ENCODE measurements at regions of chr12 and their contacts with region 1.

Region 1: GRCh38 chr12:104720339-104721038 is 237.6 kb downstream of the SLC41A2 start:
- DNase-seq: peak; percentile 32 to 92 (median 88)
- ATAC-seq: peak; percentile 87
- H3K4me3 ChIP-seq: peak overlapping the region; percentile 72
- H3K4me3 Mint-ChIP-seq: peak overlapping the region; percentile 73 to 95 (median 81)
- H3K27ac ChIP-seq: peak overlapping the region; percentile 77
- H3K27ac Mint-ChIP-seq: peak overlapping the region; percentile 86 to 96 (median 92)
- H3K4me1 ChIP-seq: peaks cover 30 to 39% of the 10 kb centered on the region in 2 donors
- H3K4me1 Mint-ChIP-seq: peaks cover 41 to 82% (median 65%) of the 10 kb centered on the region in 7 donors
- H3K27me3 ChIP-seq: no peaks in the 10 kb centered on the region
- H3K27me3 Mint-ChIP-seq: peaks cover 0 to 3% (median 0%) of the 10 kb centered on the region in 5 donors

Region 2: GRCh38 chr12:104671407-104672098 is 48.9 kb before region 1 on chr12:
- CTCF ChIA-PET with region 1: no interaction called
- POLR2A ChIA-PET with region 1: no interaction called
- intact Hi-C with region 1: loop called in 1 of 2 experiments (anchors 1 kb)
- DNase-seq: peak in 3 of 9 donors; percentile 30 to 80 (median 58)
- ATAC-seq: peak; percentile 80
- H3K4me3 ChIP-seq: no peak overlapping the region
- H3K4me3 Mint-ChIP-seq: peak overlapping the region in 7 of 10 donors; percentile 6 to 67 (median 21)
- H3K27ac ChIP-seq: no peak overlapping the region
- H3K27ac Mint-ChIP-seq: peak overlapping the region in 7 of 9 donors; percentile 11 to 92 (median 67)
- H3K4me1 ChIP-seq: peaks cover 25 to 36% of the 10 kb centered on the region in 2 donors
- H3K4me1 Mint-ChIP-seq: peaks cover 32 to 64% (median 48%) of the 10 kb centered on the region in 7 donors
- H3K27me3 ChIP-seq: no peaks in the 10 kb centered on the region
- H3K27me3 Mint-ChIP-seq: no peaks in the 10 kb centered on the region

Region 3: GRCh38 chr12:104680066-104680465 is 40.4 kb before region 1 on chr12:
- CTCF ChIA-PET with region 1: no interaction called
- POLR2A ChIA-PET with region 1: no interaction called
- intact Hi-C with region 1: loop called (anchors 1 kb)
- DNase-seq: peak in 7 of 9 donors; percentile 15 to 51 (median 30)
- ATAC-seq: peak; percentile 44
- H3K4me3 ChIP-seq: no peak overlapping the region
- H3K4me3 Mint-ChIP-seq: peak overlapping the region in 3 of 10 donors; percentile 16 to 36 (median 26)
- H3K27ac ChIP-seq: no peak overlapping the region
- H3K27ac Mint-ChIP-seq: peak overlapping the region in 3 of 9 donors; percentile 15 to 80 (median 26)
- H3K4me1 ChIP-seq: peaks cover 25 to 46% of the 10 kb centered on the region in 2 donors
- H3K4me1 Mint-ChIP-seq: peaks cover 36 to 80% (median 46%) of the 10 kb centered on the region in 7 donors
- H3K27me3 ChIP-seq: no peaks in the 10 kb centered on the region
- H3K27me3 Mint-ChIP-seq: no peaks in the 10 kb centered on the region

Region 4: DNA sequence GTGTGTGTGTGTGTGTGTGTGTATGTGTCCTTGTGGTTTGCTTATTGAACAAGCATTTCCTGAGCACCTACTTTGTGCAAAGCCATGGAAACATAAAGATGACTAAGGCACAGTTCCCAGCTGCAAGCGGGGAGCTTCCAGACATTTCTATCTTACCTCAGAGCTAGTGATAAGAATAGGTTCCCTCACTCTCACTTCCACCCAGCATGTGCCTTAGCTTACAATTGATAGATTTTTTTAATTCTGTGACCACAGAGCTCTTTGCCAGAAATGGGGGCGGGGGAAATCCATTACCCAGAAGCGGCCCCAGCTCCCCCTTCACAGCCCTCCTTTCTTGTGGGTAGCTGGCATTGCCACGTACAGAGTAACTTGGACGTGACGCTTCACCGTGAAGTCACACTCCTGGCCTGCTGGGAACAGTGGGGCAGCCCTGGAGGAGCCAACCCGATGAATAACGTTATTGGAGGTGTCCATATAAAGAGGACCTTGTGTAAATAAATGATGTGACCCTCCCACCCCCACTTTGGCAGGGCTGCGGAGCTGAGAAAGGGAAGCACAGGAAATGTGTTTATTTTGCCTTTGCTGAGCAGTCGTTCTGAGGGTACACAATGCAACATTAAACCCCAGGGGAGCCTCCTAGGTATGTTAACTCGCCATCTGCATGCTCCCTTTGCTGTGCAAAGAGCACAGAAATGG is 24.9 kb before region 1 on chr12:
- CTCF ChIA-PET with region 1: no interaction called
- POLR2A ChIA-PET with region 1: no interaction called
- intact Hi-C with region 1: loop called in 1 of 2 experiments (anchors 1 kb)
- DNase-seq: peak; percentile 40 to 80 (median 67)
- ATAC-seq: peak; percentile 95
- H3K4me3 ChIP-seq: no peak overlapping the region
- H3K4me3 Mint-ChIP-seq: peak overlapping the region in 8 of 10 donors; percentile 39 to 71 (median 56)
- H3K27ac ChIP-seq: no peak overlapping the region
- H3K27ac Mint-ChIP-seq: peak overlapping the region in 8 of 9 donors; percentile 13 to 88 (median 62)
- H3K4me1 ChIP-seq: peaks cover 27 to 37% of the 10 kb centered on the region in 2 donors
- H3K4me1 Mint-ChIP-seq: peaks cover 41 to 79% (median 50%) of the 10 kb centered on the region in 7 donors
- H3K27me3 ChIP-seq: no peaks in the 10 kb centered on the region
- H3K27me3 Mint-ChIP-seq: no peaks in the 10 kb centered on the region

Region 5: GRCh38 chr12:104740668-104741067 is 20.2 kb after region 1 on chr12:
- CTCF ChIA-PET with region 1: no interaction called
- POLR2A ChIA-PET with region 1: interaction called, 3 read pairs
- intact Hi-C with region 1: loop called in 1 of 2 experiments (anchors 2 kb)
- DNase-seq: no peak
- ATAC-seq: peak; percentile 83
- H3K4me3 ChIP-seq: no peak overlapping the region
- H3K4me3 Mint-ChIP-seq: peak overlapping the region in 9 of 10 donors; percentile 4 to 80 (median 28)
- H3K27ac ChIP-seq: no peak overlapping the region
- H3K27ac Mint-ChIP-seq: peak overlapping the region; percentile 8 to 92 (median 53)
- H3K4me1 ChIP-seq: peaks cover 24 to 37% of the 10 kb centered on the region in 2 donors
- H3K4me1 Mint-ChIP-seq: peaks cover 64 to 81% (median 71%) of the 10 kb centered on the region in 7 donors
- H3K27me3 ChIP-seq: no peaks in the 10 kb centered on the region
- H3K27me3 Mint-ChIP-seq: no peaks in the 10 kb centered on the region

Region 6: DNA sequence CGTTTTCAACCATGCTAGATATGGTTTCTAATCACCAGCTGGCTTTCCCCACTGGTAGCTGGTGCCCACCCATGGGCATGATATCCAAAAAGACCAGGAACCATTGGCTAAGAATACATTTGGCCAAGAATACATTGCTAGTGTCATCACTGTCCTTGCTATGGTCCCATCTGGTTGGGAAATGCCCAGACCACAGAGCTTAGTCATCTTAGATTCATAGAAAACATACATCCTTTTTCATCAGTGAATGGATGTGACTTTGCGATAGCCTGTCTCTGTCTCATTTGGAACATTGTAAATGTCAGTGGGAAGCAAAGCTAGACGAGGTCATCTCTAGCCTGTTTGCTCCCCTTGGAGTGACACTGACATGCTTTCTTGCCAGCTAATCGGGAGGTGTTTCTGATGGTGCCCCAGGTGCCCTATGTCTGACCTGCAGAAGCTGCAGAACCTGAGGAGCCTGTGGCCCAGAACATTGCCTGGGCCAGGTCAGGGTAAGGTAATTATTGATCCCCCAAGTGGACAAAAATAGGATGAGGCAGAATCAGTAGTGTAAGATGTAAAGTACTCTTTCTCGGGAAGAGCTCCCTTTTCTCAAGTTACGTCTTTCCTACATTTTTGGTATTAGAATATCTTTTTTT is 42.8 kb after region 1 on chr12:
- CTCF ChIA-PET with region 1: interaction called, 3 read pairs
- POLR2A ChIA-PET with region 1: no interaction called
- intact Hi-C with region 1: loop called in 1 of 2 experiments (anchors 5 kb)
- DNase-seq: no peak
- ATAC-seq: peak; percentile 69
- H3K4me3 ChIP-seq: no peak overlapping the region
- H3K4me3 Mint-ChIP-seq: peak overlapping the region in 2 of 10 donors; percentile 3 to 64
- H3K27ac ChIP-seq: no peak overlapping the region
- H3K27ac Mint-ChIP-seq: peak overlapping the region in 2 of 9 donors; percentile 13 to 61
- H3K4me1 ChIP-seq: peaks cover 0 to 11% of the 10 kb centered on the region in 2 donors
- H3K4me1 Mint-ChIP-seq: peaks cover 17 to 46% (median 22%) of the 10 kb centered on the region in 7 donors
- H3K27me3 ChIP-seq: no peaks in the 10 kb centered on the region
- H3K27me3 Mint-ChIP-seq: no peaks in the 10 kb centered on the region

Region 7: DNA sequence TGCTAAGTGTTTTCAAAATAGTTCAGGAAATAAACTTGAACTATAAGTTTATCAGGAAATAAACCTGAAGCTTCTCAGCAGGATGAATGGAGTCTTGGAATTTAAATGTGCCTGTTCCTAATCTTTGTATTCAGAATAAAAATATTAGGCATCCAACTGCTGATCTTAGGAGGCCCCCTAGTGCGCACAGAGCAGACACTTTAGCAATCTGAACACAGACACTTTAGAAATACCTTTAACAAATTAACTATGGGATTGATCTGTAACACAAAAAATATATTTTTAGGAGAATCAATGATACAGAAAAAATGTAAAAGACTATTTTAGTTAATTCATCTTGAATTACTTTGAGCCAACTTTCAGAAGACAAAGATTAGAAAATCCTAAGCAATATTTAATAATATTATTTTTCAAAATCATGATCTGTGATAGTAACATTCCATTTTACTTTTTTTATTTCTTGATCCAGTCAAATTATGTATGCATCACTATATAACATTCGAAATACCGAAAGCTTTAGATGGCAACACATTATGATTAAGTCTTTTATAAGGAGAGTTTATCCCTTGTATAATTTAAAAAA is 156.7 kb after region 1 on chr12:
- CTCF ChIA-PET with region 1: no interaction called
- POLR2A ChIA-PET with region 1: no interaction called
- intact Hi-C with region 1: loop called in 1 of 2 experiments (anchors 5 kb)
- DNase-seq: peak in 7 of 9 donors; percentile 5 to 52 (median 29)
- ATAC-seq: peak; percentile 56
- H3K4me3 ChIP-seq: no peak overlapping the region
- H3K4me3 Mint-ChIP-seq: no peak overlapping the region
- H3K27ac ChIP-seq: no peak overlapping the region
- H3K27ac Mint-ChIP-seq: no peak overlapping the region
- H3K4me1 ChIP-seq: no peaks in the 10 kb centered on the region
- H3K4me1 Mint-ChIP-seq: peaks cover 0 to 9% (median 0%) of the 10 kb centered on the region in 7 donors
- H3K27me3 ChIP-seq: no peaks in the 10 kb centered on the region
- H3K27me3 Mint-ChIP-seq: peaks cover 0 to 12% (median 0%) of the 10 kb centered on the region in 5 donors